T-cell (primary cell): ENCODE measurements at regions of chr5 and their contacts with region 1.

Region 1: GRCh38 chr5:108167174-108167573 is 214.7 kb downstream of the FBXL17 start:
- DNase-seq: no peak
- ATAC-seq: no peak
- H3K4me3 ChIP-seq: no peak overlapping the region
- H3K4me3 Mint-ChIP-seq: no peak overlapping the region
- H3K27ac ChIP-seq: no peak overlapping the region
- H3K27ac Mint-ChIP-seq: no peak overlapping the region
- H3K4me1 ChIP-seq: no peaks in the 10 kb centered on the region
- H3K4me1 Mint-ChIP-seq: no peaks in the 10 kb centered on the region
- H3K27me3 ChIP-seq: no peaks in the 10 kb centered on the region
- H3K27me3 Mint-ChIP-seq: no peaks in the 10 kb centered on the region

Region 2: DNA sequence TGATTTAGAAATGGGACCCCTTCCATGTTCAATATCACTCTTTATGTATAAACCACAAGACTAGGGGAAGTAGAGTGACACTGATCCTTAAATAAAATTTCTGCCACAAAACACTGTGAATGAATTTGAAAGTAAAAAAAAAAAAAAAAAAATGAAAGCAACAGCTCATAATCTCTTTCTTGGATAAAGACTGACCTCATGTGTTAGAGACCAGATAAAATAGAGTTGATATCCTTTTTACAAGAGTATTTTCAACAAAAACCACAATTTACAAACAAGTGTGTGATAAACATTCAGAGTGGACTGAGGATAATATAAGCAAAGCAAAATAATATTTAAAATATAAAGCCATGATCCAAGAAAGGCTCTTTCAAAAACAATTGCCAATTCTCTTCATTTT is 34.5 kb after region 1 on chr5:
- CTCF ChIA-PET with region 1: no interaction called
- POLR2A ChIA-PET with region 1: interaction called in 1 of 2 experiments, 11 read pairs
- DNase-seq: no peak
- ATAC-seq: no peak
- H3K4me3 ChIP-seq: no peak overlapping the region
- H3K4me3 Mint-ChIP-seq: no peak overlapping the region
- H3K27ac ChIP-seq: no peak overlapping the region
- H3K27ac Mint-ChIP-seq: no peak overlapping the region
- H3K4me1 ChIP-seq: no peaks in the 10 kb centered on the region
- H3K4me1 Mint-ChIP-seq: peaks cover 0 to 2% (median 0%) of the 10 kb centered on the region in 3 donors
- H3K27me3 ChIP-seq: no peaks in the 10 kb centered on the region
- H3K27me3 Mint-ChIP-seq: no peaks in the 10 kb centered on the region